Mammary epithelial cell (primary cell): ENCODE measurements at regions of chr3 and their contacts with region 1.

Region 1: GRCh38 chr3:58532794-58533220 is 4.2 kb downstream of the ACOX2 start:
- DNase-seq: peak; percentile 56
- H3K4me3 ChIP-seq: no peak overlapping the region
- H3K27ac ChIP-seq: no peak overlapping the region
- H3K4me1 ChIP-seq: peaks cover 21% of the 10 kb centered on the region
- H3K27me3 ChIP-seq: no peaks in the 10 kb centered on the region
- CTCF ChIP-seq: peak; percentile 83 to 97

Region 2: GRCh38 chr3:58324391-58325390 is 208.1 kb before region 1 on chr3:
- CTCF ChIA-PET with region 1: no interaction called
- dilution Hi-C with region 1: no loop called
- in situ Hi-C with region 1: loop called (anchors 10 kb)
- intact Hi-C with region 1: loop called (anchors 1 kb)
- DNase-seq: peak; percentile 19
- H3K4me3 ChIP-seq: no peak overlapping the region
- H3K27ac ChIP-seq: no peak overlapping the region
- H3K4me1 ChIP-seq: peaks cover 10% of the 10 kb centered on the region
- H3K27me3 ChIP-seq: no peaks in the 10 kb centered on the region
- CTCF ChIP-seq: no peak

Region 3: GRCh38 chr3:58422756-58423325 is 110.0 kb before region 1 on chr3:
- CTCF ChIA-PET with region 1: no interaction called
- dilution Hi-C with region 1: no loop called
- in situ Hi-C with region 1: no loop called
- intact Hi-C with region 1: loop called (anchors 2 kb)
- DNase-seq: no peak
- H3K4me3 ChIP-seq: no peak overlapping the region
- H3K27ac ChIP-seq: no peak overlapping the region
- H3K4me1 ChIP-seq: no peaks in the 10 kb centered on the region
- H3K27me3 ChIP-seq: no peaks in the 10 kb centered on the region
- CTCF ChIP-seq: peak; percentile 12 to 27

Region 4: DNA sequence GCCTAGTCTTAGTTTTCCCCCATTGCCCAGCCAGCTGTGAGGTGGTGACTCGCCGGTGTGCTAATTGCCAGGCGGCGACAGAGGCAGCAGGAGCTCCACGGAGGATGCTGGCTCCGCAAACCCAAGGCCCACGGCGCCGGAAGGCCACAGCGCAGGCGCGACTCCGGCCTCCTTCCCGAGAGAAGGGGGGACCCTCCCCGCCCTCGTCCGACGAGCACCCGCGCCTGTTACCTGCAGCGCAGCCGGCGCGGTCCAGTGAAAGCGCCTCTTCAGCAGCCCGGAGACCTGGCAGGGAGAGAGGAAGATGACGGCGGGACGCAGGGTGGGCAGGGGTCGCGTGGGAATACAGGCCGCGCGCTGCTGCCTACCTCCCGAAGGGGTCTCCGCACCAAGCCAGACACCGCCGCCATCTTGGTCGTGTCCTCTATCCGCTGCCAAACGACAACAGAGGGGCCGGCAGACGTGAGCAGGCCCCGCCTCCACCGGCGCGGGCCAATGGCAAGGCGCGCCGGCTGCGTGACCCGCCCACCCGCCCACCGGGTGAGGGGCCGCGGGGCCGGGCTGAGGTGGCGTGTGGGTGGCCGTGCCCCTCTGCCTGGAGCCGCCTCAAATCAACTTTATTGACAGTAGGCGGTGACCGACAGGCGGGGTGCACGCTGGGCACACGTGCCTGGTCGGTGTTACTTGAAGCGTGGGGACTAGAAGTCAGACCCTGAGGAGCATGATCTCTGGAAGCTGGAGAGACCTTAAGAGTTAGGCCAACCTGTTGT is 99.2 kb before region 1 on chr3 and contains the start of gene PDHB:
- CTCF ChIA-PET with region 1: no interaction called
- dilution Hi-C with region 1: no loop called
- in situ Hi-C with region 1: no loop called
- intact Hi-C with region 1: loop called (anchors 2 kb)
- DNase-seq: peak; percentile 86
- H3K4me3 ChIP-seq: peak within 1 kb of the TSS; percentile 84 to 96 (median 92)
- H3K27ac ChIP-seq: peak within 1 kb of the TSS; percentile 55
- H3K4me1 ChIP-seq: peaks cover 21% of the 10 kb centered on the region
- H3K27me3 ChIP-seq: no peaks in the 10 kb centered on the region
- CTCF ChIP-seq: no peak
- total RNA-seq, gene PDHB: 43.2 to 44.9 TPM

Region 5: GRCh38 chr3:58452176-58452575 is 80.6 kb before region 1 on chr3:
- CTCF ChIA-PET with region 1: no interaction called
- dilution Hi-C with region 1: loop called (anchors 5 kb)
- in situ Hi-C with region 1: no loop called
- intact Hi-C with region 1: no loop called
- DNase-seq: no peak
- H3K4me3 ChIP-seq: no peak overlapping the region
- H3K27ac ChIP-seq: no peak overlapping the region
- H3K4me1 ChIP-seq: no peaks in the 10 kb centered on the region
- H3K27me3 ChIP-seq: no peaks in the 10 kb centered on the region
- CTCF ChIP-seq: no peak

Region 6: DNA sequence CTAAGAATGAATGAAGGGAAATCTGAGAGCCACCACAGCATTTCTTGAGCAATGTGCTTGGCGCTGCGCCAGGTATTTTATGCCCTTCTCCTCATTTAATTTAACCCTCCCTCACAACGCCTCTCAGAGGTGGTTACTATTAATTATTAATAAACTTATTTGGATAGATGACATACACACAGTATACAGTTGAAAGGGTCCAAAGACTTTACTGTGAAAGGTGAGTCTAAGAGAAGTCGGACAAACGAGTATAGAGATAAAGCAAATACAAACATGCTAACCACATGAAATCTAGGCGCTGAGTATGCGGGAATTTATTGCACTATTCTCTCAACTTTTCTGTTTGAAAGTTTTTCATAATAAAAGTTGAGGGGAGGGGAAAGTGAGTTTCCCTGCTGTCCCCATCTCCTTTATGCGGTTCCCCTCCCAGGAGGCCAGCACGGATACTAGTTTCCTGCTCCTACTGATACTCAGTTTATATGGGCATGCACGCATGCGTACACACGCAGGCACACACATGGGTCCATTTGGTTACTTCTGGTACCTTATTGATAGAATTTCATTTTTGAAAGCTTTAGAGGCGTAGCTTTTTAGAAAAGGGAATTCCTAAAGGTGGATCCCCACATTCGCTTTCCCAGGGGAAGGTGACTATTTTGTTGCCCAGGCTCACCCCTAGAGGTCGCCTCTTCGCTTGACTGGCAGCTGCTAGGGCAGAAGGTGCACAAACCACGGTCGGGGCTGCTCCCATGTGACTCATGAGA is 69.4 kb before region 1 on chr3:
- CTCF ChIA-PET with region 1: no interaction called
- dilution Hi-C with region 1: no loop called
- in situ Hi-C with region 1: no loop called
- intact Hi-C with region 1: loop called (anchors 1 kb)
- DNase-seq: peak; percentile 90
- H3K4me3 ChIP-seq: no peak overlapping the region
- H3K27ac ChIP-seq: no peak overlapping the region
- H3K4me1 ChIP-seq: peaks cover 17% of the 10 kb centered on the region
- H3K27me3 ChIP-seq: peaks cover 4% of the 10 kb centered on the region
- CTCF ChIP-seq: peak; percentile 91 to 96

Region 7: DNA sequence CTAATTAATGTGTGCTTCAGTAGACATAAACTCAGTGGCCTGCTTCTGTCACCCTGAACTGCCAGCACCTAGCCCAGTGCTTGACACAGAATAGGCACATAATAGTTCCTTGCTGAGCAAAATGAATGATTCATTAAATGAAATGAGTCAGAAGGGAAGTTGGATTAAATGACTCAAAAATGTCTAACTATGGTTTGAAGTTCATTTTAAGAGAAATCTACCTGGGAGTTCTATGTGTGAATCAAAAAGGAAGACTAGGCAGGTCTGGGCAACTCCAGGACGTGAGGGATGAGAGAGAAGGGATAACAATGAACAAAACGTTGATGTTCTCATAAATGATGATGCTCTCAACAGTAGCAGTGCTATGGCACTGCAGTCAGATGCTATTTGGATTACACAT is 342.0 kb after region 1 on chr3:
- CTCF ChIA-PET with region 1: no interaction called
- dilution Hi-C with region 1: no loop called
- in situ Hi-C with region 1: no loop called
- intact Hi-C with region 1: no loop called
- DNase-seq: peak; percentile 98
- H3K4me3 ChIP-seq: no peak overlapping the region
- H3K27ac ChIP-seq: peak overlapping the region; percentile 96
- H3K4me1 ChIP-seq: peaks cover 52% of the 10 kb centered on the region
- H3K27me3 ChIP-seq: no peaks in the 10 kb centered on the region
- CTCF ChIP-seq: no peak